BJ (cell line): ENCODE measurements at regions of chr1 and their contacts with region 1.

Region 1: DNA sequence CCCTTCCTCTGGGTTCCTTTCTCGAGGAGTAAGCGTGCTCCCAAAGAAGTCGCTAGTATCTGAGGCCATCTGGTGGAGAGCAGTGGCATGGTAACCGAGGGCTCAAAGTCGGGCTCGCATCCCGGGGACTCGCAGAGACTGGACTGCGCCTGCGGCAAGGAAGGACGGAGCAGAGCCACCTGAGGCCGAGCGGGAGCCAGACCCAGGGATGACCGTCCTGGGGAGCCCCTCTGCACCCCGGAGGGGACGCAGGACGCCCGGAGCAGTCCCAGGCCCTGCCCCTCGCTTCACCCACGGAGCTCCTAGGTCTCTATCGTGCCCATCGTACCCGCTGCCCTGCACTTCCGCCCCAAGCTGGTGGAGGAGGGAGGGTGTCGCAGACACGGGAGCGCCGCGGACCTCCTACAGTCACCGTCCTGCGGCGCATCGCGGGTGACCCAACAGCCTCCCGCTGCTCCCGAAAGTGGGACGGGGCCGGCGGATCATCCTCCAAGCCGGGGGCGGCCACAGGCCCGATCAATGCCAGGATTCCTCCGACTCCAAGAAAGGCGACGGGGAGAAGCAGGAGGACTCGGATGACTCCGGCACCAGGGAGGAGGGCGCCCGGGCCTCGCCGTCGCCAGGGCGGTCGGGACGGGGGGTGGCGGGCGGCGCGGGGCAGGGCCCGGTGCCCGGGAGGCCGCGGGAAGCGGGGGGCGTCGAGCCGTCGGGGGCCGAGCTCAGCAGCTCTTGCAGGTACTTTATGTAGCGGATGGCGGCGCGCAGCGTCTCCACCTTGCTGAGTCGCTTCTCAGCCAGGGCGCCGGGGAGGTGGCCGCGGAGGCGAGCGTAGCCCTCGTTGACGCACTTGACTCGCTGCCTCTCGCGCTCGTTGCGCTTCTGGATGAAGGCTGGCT is 2.3 kb upstream of the CACNA1S start:
- DNase-seq: peak; percentile 61
- H3K4me3 ChIP-seq: peak overlapping the region; percentile 58
- H3K27me3 ChIP-seq: peaks cover 3% of the 10 kb centered on the region; the same call in 1 of the 2 replicates
- CTCF ChIP-seq: peak; percentile 92

Region 2: DNA sequence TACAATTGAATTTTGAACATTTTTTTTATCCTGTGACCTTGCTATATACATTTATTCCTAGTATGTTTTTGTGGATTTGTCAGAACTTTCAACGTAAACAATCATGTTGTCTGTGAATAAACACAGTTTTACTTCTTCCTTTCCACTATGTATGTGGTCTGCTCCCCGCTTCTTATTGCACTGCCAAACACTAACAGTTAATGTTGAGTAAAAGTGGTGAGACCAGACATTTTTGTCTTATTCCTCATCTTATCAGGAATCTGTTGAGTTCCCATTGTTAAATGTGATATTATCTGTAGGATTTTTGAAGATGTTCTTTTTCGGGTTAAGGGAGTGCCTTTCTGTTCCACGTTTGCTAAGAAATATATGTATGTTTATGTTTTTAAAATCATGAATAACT is 329.9 kb before region 1 on chr1:
- CTCF ChIA-PET with region 1: no interaction called
- POLR2A ChIA-PET with region 1: no interaction called
- DNase-seq: no peak
- H3K4me3 ChIP-seq: no peak overlapping the region
- H3K27me3 ChIP-seq: no peaks in the 10 kb centered on the region
- CTCF ChIP-seq: no peak

Region 3: DNA sequence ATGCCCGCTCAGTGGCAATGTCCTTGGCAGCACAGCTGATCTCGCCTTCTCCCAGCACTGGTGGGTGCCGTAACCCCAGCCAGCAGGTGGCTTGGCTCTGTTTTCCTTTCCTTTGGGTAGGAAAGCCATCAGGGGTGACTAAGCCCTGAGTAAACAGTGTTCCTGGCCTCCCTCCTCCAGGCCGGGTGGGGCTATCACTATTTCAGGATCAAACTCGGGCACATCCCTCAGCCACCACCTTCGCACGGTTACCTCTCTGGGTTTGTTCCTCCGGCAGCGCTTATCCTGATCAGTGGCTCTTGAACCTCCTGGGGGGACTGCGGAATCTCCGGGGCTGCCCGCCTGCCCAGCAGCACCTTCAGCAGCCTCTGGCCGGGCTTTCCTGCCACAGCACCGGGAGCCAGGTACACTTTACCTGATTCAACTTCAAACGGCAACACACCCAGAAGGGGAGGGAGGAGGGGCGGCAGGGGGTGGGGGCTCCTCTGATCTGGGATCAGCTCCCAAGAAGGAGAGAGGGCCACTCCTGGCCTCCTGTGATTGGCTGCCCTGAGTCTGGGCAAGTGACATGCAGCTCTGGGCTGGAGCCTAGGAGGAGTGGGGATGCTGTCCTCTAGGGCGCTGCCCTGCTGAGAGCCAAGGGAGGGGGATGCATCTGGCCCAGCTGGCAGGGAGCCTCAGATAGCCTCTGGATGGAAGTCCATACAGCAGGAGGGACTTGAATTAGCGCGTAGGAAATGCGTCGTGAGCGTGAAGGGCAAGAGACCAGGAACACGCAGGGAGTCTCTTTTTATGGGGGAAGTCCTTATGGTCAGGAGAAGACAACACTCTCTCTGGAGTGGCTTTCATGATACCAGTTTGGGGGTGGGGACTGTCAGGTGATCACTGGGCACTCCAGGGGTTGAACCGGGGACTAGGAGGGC is 12.6 kb after region 1 on chr1 and contains the start of gene ASCL5:
- CTCF ChIA-PET with region 1: interaction called, 16 read pairs
- POLR2A ChIA-PET with region 1: no interaction called
- DNase-seq: no peak
- H3K4me3 ChIP-seq: no peak within 1 kb of the TSS
- H3K27me3 ChIP-seq: peaks cover 14% of the 10 kb centered on the region
- CTCF ChIP-seq: no peak
- polyA plus RNA-seq, gene ASCL5: 0.06 TPM in 1 of 2 replicates, not detected in the other

Region 4: DNA sequence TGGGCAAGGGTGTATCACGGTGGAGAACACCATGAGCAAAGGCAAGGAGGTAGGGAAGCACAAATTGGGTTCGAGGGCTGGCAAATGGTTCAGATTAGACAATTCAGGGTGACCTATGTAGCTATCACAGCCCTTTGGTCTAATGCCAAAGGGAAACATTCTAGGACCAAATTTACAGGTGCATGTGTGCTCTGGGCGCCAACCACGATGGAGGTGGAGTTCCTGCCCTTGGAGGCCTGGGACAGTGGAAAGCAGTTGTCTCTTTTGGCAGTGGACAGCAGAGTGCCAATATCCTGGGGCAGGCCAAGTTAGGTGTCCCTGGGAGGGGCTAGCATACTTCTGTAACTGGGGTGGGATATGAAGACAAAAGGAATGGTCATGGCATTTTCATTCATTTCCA is 116.2 kb after region 1 on chr1:
- CTCF ChIA-PET with region 1: no interaction called
- POLR2A ChIA-PET with region 1: no interaction called
- DNase-seq: no peak
- H3K4me3 ChIP-seq: no peak overlapping the region
- H3K27me3 ChIP-seq: no peaks in the 10 kb centered on the region; the same call in 1 of the 2 replicates
- CTCF ChIP-seq: no peak